ENCODE measurements at regions of chr13 and their contacts with region 1.

Region 1: GRCh38 chr13:43804461-43805070 is 17.8 kb upstream of the ENOX1 start:
- DNase-seq: no peak
- ATAC-seq: no peak
- H3K4me3 Mint-ChIP-seq: no peak overlapping the region
- H3K27ac Mint-ChIP-seq: no peak overlapping the region
- H3K4me1 Mint-ChIP-seq: no peaks in the 10 kb centered on the region
- H3K27me3 Mint-ChIP-seq: peaks cover 7% of the 10 kb centered on the region
- CTCF ChIP-seq: no peak

Region 2: DNA sequence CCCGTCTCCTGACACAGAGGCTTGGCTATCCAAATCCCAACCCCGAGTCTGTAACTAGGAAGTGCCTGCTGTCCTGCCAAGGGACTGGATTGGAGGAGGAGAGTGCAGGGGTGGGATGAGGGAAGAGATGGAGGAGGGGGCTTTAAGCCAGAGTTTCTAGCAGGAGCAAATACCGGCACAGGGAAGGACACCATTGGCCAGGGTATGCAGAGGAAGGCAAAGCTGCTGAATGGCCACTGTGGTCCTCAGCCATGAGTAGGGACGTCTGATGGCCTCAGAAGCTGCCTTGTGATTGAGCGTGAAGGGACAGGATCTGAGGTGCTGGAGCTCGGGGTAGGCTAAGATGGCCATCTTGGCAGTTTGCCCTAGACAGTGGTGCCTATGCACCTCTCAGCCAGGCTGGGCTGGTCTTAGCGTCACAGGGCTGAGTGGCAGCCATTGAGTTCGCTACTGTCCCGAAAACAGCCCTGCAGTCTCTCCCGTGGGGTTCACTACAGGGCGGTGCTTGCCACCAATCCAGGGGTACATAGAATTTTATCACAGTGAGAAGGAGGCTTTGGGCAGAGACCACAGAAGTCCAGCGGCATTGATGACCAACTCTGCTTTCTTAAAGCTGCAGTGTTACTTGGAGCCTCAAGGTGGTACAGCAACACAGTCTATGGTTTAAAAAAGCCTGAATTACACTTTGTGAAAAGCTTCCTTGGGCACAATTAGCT is 1470.8 kb before region 1 on chr13:
- CTCF ChIA-PET with region 1: interaction called, 4 read pairs
- POLR2A ChIA-PET with region 1: no interaction called
- intact Hi-C with region 1: loop called (anchors 2 kb)
- DNase-seq: no peak
- ATAC-seq: peak; percentile 84
- H3K4me3 Mint-ChIP-seq: no peak overlapping the region
- H3K27ac Mint-ChIP-seq: no peak overlapping the region
- H3K4me1 Mint-ChIP-seq: peaks cover 21% of the 10 kb centered on the region
- H3K27me3 Mint-ChIP-seq: no peaks in the 10 kb centered on the region
- CTCF ChIP-seq: no peak

Region 3: GRCh38 chr13:42594970-42595571 is 1209.5 kb before region 1 on chr13:
- CTCF ChIA-PET with region 1: interaction called, 19 read pairs
- POLR2A ChIA-PET with region 1: no interaction called
- intact Hi-C with region 1: loop called (anchors 1 kb)
- DNase-seq: no peak
- ATAC-seq: peak; percentile 64
- H3K4me3 Mint-ChIP-seq: no peak overlapping the region
- H3K27ac Mint-ChIP-seq: no peak overlapping the region
- H3K4me1 Mint-ChIP-seq: no peaks in the 10 kb centered on the region
- H3K27me3 Mint-ChIP-seq: peaks cover 1% of the 10 kb centered on the region
- CTCF ChIP-seq: peak; percentile 84

Region 4: GRCh38 chr13:42836930-42837690 is 967.5 kb before region 1 on chr13:
- CTCF ChIA-PET with region 1: no interaction called
- POLR2A ChIA-PET with region 1: no interaction called
- intact Hi-C with region 1: loop called (anchors 5 kb)
- DNase-seq: no peak
- ATAC-seq: no peak
- H3K4me3 Mint-ChIP-seq: no peak overlapping the region
- H3K27ac Mint-ChIP-seq: no peak overlapping the region
- H3K4me1 Mint-ChIP-seq: no peaks in the 10 kb centered on the region
- H3K27me3 Mint-ChIP-seq: peaks cover 7% of the 10 kb centered on the region
- CTCF ChIP-seq: no peak

Region 5: DNA sequence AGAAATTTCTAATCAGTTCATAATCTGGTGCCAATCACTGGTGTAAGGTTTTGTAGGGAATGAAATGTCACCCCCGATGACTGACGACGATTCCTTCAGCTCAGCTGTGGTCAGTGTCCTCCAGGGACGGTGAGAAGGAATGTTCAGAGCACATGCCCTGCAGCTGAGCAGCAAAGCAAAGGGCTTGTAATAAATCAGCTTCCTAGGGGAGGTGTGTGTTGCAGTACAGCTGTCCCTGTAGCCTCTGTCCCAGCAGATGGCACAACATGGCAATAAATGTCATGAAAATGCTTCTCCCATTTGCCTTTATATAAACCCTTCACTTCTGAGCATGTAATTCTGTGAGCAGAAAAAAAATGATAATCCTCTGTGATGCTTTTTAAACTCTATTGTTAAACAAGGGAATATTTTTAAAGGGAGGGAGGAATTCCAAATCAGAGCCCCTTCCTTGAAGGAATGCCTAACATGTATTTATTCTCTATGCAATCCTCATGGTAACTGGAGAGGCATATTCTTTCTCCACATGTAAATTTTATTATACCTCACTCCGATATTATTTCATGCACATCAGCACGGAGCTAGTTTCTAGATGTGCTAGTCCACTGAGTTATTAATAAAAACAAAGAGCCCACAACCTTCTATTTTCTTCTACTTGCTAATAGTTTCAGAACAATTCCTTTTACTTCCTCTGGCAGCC is 920.6 kb before region 1 on chr13:
- CTCF ChIA-PET with region 1: no interaction called
- POLR2A ChIA-PET with region 1: no interaction called
- intact Hi-C with region 1: loop called (anchors 10 kb)
- DNase-seq: no peak
- ATAC-seq: no peak
- H3K4me3 Mint-ChIP-seq: no peak overlapping the region
- H3K27ac Mint-ChIP-seq: no peak overlapping the region
- H3K4me1 Mint-ChIP-seq: no peaks in the 10 kb centered on the region
- H3K27me3 Mint-ChIP-seq: peaks cover 5% of the 10 kb centered on the region
- CTCF ChIP-seq: no peak

Region 6: GRCh38 chr13:43085545-43085944 is 719.0 kb before region 1 on chr13:
- CTCF ChIA-PET with region 1: interaction called, 6 read pairs
- POLR2A ChIA-PET with region 1: interaction called, 10 read pairs
- intact Hi-C with region 1: loop called (anchors 1 kb)
- DNase-seq: no peak
- ATAC-seq: peak; percentile 28
- H3K4me3 Mint-ChIP-seq: no peak overlapping the region
- H3K27ac Mint-ChIP-seq: no peak overlapping the region
- H3K4me1 Mint-ChIP-seq: peaks cover 23% of the 10 kb centered on the region
- H3K27me3 Mint-ChIP-seq: no peaks in the 10 kb centered on the region
- CTCF ChIP-seq: no peak

Region 7: DNA sequence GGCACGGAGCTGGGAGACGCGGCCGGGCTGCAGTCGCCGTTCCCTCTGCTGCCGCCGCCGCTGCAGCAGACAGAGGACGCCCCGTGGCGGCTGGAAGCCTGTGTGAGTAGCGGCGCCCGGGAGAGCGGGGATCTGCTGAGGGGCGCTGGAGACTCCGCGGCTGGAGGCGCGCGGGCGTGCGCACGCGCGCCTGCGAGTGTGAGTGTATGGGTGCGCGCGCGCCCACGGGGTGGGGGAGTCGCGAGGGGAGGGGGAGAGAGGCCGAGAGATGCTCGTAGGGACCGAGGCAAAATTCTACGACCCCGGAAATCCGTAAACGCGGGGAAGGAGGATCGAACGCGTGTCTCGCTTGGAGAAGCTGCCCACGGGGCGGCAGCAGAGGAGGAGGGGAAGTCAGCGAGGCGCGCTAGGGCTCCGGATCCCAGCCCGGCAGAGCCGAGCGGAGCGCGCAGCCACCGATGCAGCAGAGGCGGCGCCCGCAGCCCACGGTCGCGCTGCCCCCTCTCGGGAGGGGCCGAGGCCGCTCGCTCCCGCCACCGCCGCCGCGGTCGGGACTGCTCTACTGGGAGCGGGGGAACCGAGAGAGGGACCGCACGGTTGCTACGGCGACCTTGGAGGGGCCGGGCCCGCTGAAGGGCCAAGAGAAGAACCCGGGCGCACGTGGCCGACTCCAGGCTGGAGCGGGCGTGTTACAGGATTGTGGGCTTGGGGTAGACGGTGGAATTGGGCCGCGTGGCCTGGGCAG is 17.6 kb before region 1 on chr13 and contains the start of gene ENOX1:
- CTCF ChIA-PET with region 1: interaction called, 10 read pairs
- POLR2A ChIA-PET with region 1: no interaction called
- intact Hi-C with region 1: no loop called
- DNase-seq: peak; percentile 19
- ATAC-seq: peak; percentile 39
- H3K4me3 Mint-ChIP-seq: peak within 1 kb of the TSS; percentile 79
- H3K27ac Mint-ChIP-seq: no peak within 1 kb of the TSS
- H3K4me1 Mint-ChIP-seq: peaks cover 16% of the 10 kb centered on the region
- H3K27me3 Mint-ChIP-seq: peaks cover 32% of the 10 kb centered on the region
- CTCF ChIP-seq: no peak
- total RNA-seq, gene ENOX1: not detected in 2 replicates

Region 8: GRCh38 chr13:45356966-45357672 is 1552.6 kb after region 1 on chr13:
- CTCF ChIA-PET with region 1: no interaction called
- POLR2A ChIA-PET with region 1: no interaction called
- intact Hi-C with region 1: no loop called
- DNase-seq: no peak
- ATAC-seq: no peak
- H3K4me3 Mint-ChIP-seq: no peak overlapping the region
- H3K27ac Mint-ChIP-seq: no peak overlapping the region
- H3K4me1 Mint-ChIP-seq: peaks cover 7% of the 10 kb centered on the region
- H3K27me3 Mint-ChIP-seq: no peaks in the 10 kb centered on the region
- CTCF ChIP-seq: no peak

Measured in activated B cell treated with CpG ODN at 0.5 μM for 24 hours (primary cell).